Activated CD8-positive, alpha-beta T cell treated with anti-CD3 and anti-CD28 coated beads for 36 hours (primary cell): ENCODE measurements at regions of chr1 and their contacts with region 1.

Region 1: DNA sequence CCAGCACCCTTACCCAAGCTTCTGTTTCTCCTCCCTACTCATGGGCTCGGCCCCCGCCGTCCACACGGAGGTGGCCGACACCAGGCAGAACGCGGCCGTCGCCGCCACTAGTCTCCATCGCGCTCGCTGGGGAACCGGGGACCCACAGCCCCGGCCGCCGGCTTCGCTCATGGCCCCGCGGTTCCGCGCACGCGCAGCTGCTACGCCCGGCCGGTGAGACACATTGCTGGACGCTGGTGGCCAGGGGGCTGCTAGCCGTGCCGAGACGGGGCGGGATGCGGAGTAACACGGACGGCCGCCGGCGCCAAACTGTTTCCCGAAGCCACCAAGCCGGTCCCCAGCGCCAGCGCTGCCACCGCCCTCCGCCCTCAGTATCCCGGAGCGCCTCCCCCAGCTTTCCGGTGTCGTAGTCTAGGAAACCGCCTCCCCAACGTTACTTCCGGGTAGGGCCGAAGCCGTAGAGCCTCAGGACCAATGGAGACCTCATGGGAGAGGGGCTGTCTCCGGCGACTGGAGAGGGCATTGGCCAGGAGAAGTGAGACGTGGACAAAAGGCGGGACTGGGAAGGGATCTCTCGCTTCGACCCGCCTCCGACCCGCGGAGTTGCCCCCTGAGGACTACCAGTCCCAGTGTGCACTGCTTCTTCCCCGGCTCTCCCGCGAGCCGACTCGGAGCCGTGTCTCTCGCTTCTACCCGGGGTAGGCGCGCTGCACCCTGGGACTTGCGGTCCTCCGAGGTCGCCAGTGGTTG is at the start of gene EDEM3:
- DNase-seq: peak; percentile 98
- ATAC-seq: peak; percentile 94
- H3K4me3 Mint-ChIP-seq: peak within 1 kb of the TSS; percentile 95
- H3K27ac Mint-ChIP-seq: peak within 1 kb of the TSS; percentile 97
- H3K4me1 Mint-ChIP-seq: peaks cover 41% of the 10 kb centered on the region
- H3K27me3 Mint-ChIP-seq: peaks cover 4% of the 10 kb centered on the region
- CTCF ChIP-seq: no peak
- total RNA-seq, gene EDEM3: 12.5 to 14.5 TPM

Region 2: GRCh38 chr1:184743062-184743756 is 11.4 kb before region 1 on chr1:
- CTCF ChIA-PET with region 1: interaction called, 3 read pairs
- POLR2A ChIA-PET with region 1: interaction called, 19 read pairs
- intact Hi-C with region 1: no loop called
- DNase-seq: no peak
- ATAC-seq: peak; percentile 94
- H3K4me3 Mint-ChIP-seq: peak overlapping the region; percentile 14
- H3K27ac Mint-ChIP-seq: peak overlapping the region; percentile 81
- H3K4me1 Mint-ChIP-seq: peaks cover 56% of the 10 kb centered on the region
- H3K27me3 Mint-ChIP-seq: no peaks in the 10 kb centered on the region
- CTCF ChIP-seq: no peak

Region 3: DNA sequence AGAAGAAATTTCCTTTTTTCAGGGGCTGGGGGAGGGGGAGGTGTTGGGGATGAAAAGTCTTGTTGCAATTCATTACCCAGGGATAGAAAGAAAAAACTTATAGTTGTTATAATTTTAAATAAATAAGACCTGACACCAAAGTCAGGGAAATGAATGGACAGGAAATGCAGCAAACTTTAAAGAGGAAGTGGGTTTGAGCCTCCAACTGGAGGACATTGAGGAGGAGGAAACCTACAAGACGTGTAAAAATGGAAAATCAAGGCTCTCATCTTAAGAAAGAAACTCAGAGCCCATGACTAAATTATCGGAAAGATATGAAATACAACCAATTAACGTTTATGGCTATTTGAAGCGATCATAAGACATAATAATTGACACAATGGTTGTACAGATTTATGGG is 165.2 kb after region 1 on chr1:
- CTCF ChIA-PET with region 1: no interaction called
- POLR2A ChIA-PET with region 1: no interaction called
- intact Hi-C with region 1: no loop called
- DNase-seq: no peak
- ATAC-seq: no peak
- H3K4me3 Mint-ChIP-seq: no peak overlapping the region
- H3K27ac Mint-ChIP-seq: no peak overlapping the region
- H3K4me1 Mint-ChIP-seq: peaks cover 6% of the 10 kb centered on the region
- H3K27me3 Mint-ChIP-seq: peaks cover 6% of the 10 kb centered on the region
- CTCF ChIP-seq: no peak